HAP-1 (cell line): ENCODE measurements at regions of chrX and their contacts with region 1.

Region 1: GRCh38 chrX:108224727-108225621 is 133.4 kb downstream of the ATG4A start:
- DNase-seq: peak; percentile 48 to 76
- H3K4me3 ChIP-seq: no peak overlapping the region
- H3K4me1 ChIP-seq: peaks cover 3% of the 10 kb centered on the region; the same call in 1 of the 2 replicates
- H3K27me3 ChIP-seq: no peaks in the 10 kb centered on the region

Region 2: DNA sequence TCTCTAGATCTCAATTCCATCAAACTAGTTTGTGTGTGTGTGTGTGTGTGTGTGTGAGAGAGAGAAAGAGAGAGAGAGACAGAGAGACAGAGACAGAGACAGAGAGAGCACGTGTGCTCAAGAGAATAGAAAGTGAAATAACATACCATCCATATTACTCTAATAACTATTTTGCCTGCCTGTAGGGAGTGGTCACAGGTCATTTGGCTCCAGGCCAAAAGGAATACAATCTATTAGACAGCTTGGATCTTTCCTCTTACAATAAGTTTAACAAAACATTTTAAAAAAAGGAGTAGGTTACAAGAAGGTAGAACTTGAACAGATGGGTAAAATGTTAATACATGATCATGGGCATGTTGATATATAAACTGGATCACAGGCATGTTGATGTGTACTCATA is 137.1 kb after region 1 on chrX:
- in situ Hi-C with region 1: no loop called
- DNase-seq: no peak
- H3K4me3 ChIP-seq: no peak overlapping the region
- H3K4me1 ChIP-seq: peaks cover 22% of the 10 kb centered on the region
- H3K27me3 ChIP-seq: no peaks in the 10 kb centered on the region

Region 3: DNA sequence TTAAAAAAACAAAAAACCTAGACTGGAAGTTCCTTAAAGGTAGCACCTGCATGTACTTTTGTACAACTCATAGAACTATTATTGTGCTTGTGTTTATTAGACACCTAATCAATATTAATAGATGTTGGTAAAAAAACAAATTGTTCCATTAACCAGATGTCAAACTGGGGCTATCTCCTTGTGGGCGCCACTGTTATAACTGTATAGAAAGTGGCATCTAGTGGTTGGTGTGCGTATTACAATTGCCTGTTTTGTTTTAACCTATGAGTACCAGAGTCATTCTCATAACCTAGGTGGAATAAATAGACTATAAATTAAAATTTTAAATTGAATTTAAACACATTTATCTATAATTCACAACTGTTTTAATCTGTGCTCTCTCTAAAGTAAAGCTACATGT is 312.0 kb after region 1 on chrX:
- in situ Hi-C with region 1: loop called (anchors 10 kb)
- DNase-seq: peak; percentile 53 to 67
- H3K4me3 ChIP-seq: no peak overlapping the region
- H3K4me1 ChIP-seq: peaks cover 32% of the 10 kb centered on the region
- H3K27me3 ChIP-seq: no peaks in the 10 kb centered on the region

Region 4: DNA sequence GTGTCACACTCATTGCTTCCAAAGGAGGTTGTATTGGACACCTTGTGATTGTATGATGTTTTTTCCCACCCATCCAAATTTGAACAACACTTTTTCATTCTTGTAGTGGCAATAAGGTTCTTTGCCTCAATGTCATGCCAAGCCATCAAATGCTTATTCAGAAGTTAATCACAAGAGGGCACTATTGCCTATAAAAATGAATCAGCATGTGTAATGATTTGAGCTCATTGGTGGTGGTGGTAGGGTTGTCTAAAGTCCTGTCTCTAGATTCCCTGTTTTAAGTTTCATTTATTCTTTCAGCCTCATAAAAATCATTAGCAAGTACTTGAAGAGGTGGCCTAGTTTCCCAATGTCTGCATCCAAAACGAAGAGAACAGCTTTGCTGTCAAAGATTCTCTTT is 474.4 kb after region 1 on chrX:
- in situ Hi-C with region 1: loop called (anchors 25 kb)
- DNase-seq: peak in 1 of 2 experiments; percentile 60
- H3K4me3 ChIP-seq: no peak overlapping the region
- H3K4me1 ChIP-seq: peaks cover 20% of the 10 kb centered on the region
- H3K27me3 ChIP-seq: no peaks in the 10 kb centered on the region